Colonic mucosa (tissue), 4 donors: ENCODE measurements at regions of chr5 and their contacts with region 1.

Region 1: DNA sequence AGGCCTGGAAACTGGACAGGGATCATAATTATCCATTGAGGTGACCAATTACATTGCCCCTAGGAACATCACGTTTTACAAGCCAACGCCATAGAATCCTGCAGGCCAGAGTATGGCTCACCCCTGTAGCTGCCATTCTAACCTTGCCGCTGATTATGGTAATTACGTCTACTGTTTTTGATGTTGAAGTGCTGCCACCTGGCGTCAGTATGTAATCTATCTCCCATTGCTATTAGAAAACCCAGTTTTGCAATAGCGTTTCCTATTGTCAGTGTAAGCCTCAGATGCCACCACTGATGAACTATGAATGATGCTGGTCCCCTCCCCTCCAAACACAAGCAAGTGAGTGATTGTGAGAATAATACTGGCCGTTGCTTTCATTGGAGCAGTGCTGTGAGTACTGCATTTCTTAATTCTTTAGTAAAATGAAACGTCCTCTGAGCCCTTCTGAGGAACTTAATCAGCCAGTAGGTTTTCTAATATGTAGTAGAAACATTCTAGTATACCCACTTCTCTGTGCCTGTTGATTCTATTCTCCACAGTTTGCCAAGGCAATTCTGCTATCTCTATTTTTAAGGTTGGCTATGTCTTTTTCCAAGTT is 100.5 kb upstream of the NMUR2 start:
- DNase-seq: peak; percentile 53
- H3K4me3 ChIP-seq: no peak overlapping the region
- H3K27ac ChIP-seq: no peak overlapping the region
- H3K4me1 ChIP-seq: no peaks in the 10 kb centered on the region
- H3K27me3 ChIP-seq: no peaks in the 10 kb centered on the region
- CTCF ChIP-seq: peak; percentile 55

Region 2: GRCh38 chr5:151825445-151825844 is 680.1 kb before region 1 on chr5:
- intact Hi-C with region 1: loop called (anchors 5 kb)
- DNase-seq: peak; percentile 65
- H3K4me3 ChIP-seq: no peak overlapping the region
- H3K27ac ChIP-seq: no peak overlapping the region
- H3K4me1 ChIP-seq: no peaks in the 10 kb centered on the region
- H3K27me3 ChIP-seq: no peaks in the 10 kb centered on the region
- CTCF ChIP-seq: peak; percentile 88

Region 3: DNA sequence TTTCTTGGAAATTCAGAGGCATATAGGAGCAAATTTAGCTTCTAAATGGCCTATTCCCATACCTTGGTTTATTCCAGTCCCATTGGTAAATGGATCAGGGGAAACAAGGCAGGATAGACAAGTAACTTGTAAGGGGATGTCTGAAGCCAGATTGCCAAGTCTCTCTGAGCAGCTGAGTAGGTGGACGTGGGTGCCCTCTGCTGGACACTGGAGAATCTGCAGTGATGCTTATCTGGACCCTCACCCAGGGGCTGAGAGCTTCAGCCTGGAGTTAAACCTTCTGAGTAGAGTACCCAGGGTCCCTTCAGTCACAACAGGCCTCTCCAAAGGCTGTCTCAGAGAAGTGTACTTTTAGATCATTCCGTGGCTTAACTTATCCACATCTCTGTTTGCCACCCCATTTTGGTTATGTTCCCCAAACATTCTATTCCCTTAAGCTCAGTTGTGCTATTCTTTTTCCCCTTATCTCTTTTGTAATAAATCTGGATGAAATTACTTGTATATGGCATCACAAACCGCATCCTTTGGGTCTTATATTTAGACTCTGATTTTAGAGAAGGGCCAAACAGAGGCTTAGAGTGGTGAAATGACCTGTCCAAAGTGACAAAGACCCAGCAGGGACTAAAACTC is 362.6 kb before region 1 on chr5:
- intact Hi-C with region 1: loop called (anchors 10 kb)
- DNase-seq: peak; percentile 31
- H3K4me3 ChIP-seq: no peak overlapping the region
- H3K27ac ChIP-seq: no peak overlapping the region
- H3K4me1 ChIP-seq: no peaks in the 10 kb centered on the region
- H3K27me3 ChIP-seq: no peaks in the 10 kb centered on the region
- CTCF ChIP-seq: peak; percentile 72

Region 4: GRCh38 chr5:152380415-152381123 is 125.0 kb before region 1 on chr5:
- intact Hi-C with region 1: loop called (anchors 5 kb)
- DNase-seq: no peak
- H3K4me3 ChIP-seq: no peak overlapping the region
- H3K27ac ChIP-seq: no peak overlapping the region
- H3K4me1 ChIP-seq: no peaks in the 10 kb centered on the region
- H3K27me3 ChIP-seq: no peaks in the 10 kb centered on the region
- CTCF ChIP-seq: no peak